Dendritic cell treated with granulocyte-macrophage colony-stimulating factor and Interleukin-4, amounts not matched to agents 40 ng/mL and 50 ng/mL, for 4 days (primary cell): ENCODE measurements at regions of chr2 and their contacts with region 1.

Region 1: DNA sequence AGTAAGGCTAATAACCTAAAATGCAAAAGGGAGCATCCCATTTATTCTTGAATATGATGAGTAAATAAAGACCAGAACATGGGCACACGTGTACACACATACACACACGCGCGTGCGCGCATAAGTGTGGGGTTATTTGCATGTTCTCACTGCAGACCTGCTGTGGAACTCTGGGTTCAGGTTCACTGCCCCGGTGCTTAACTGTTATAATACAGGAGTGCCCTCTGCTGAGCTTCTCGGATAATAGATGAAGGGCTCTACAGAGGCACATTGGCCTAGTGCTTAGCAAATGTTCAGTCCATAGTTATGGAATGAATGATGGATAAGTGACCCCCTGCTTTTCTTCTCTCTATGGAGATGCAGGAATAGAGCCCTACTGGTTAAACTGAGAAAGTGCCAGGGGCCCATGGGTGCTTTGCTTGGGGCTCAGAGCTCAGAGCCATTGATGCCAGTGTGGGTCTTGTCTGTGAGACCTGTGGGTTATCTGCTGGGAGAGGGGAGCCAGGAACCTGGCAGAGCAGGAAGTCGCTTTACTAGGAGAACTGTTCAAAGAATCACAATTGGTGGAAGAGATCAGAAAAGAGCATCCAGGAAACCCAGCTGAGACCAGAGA is 3.6 kb upstream of the ARL4C start:
- H3K4me3 Mint-ChIP-seq: no peak overlapping the region
- H3K27ac Mint-ChIP-seq: no peak overlapping the region
- H3K4me1 Mint-ChIP-seq: peaks cover 12% of the 10 kb centered on the region
- H3K27me3 Mint-ChIP-seq: peaks cover 25% of the 10 kb centered on the region

Region 2: DNA sequence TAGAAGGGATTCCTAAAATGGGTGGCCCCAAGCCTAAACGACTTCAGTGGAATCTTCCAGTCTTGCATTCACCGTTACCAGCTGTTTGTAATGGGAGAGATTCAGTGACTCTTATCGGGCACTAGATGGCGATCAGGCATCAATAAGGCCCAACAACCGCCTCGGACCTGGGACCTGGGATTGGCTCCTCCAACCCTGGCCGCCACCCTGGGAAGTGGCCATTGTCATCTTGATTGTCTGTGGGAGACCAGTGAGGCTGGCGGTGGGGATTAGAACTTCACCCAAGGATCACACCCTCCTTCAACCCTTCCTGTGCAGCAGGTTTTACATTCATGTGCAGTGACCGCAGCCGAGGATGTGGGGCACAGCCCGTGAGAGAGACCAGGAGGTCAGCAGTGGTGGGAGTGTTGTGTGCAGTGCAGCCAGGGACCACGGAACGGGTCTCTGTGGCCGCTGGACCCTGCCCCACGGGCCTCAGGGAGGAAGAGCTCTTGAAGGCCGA is 364.7 kb before region 1 on chr2:
- intact Hi-C with region 1: loop called (anchors 1 kb)
- H3K4me3 Mint-ChIP-seq: no peak overlapping the region
- H3K27ac Mint-ChIP-seq: no peak overlapping the region
- H3K4me1 Mint-ChIP-seq: no peaks in the 10 kb centered on the region
- H3K27me3 Mint-ChIP-seq: peaks cover 1% of the 10 kb centered on the region

Region 3: DNA sequence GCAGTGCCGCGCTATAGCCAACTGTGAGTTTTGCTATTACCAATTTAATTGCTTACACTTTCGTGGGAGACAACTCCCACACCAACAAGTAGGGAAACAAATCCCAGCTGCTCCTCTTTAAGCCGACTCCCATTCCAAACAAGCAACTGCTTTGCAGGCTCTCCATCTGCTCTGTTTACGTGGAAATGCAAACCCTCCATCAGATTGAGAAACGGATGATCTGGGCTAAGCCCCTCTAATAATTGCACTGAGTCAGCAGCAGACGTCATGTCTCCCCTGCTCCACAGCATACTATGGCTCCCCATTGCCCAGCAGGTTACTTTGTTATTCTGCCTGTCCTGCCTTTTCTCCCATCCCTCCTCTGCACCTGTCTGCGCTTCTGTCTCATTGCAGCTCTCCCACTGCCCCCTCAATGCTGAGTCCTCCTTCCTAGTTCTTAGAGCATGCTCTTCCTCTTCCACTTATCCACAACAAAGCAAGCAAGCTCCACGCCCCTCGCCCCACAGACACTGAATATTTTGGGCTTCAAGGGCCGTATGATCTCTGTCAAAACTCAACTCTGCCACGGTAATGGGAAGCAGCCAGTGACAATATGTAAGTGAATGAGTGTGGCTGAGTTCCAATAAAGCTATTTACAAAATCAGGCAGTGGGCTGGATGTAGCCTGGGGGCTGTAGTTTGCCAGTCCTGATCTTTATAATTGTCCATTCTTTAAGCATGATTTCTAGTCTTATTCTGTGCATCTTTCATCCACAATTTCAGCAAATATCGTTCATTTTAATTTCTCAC is 35.9 kb after region 1 on chr2:
- intact Hi-C with region 1: no loop called
- H3K4me3 Mint-ChIP-seq: no peak overlapping the region
- H3K27ac Mint-ChIP-seq: no peak overlapping the region
- H3K4me1 Mint-ChIP-seq: no peaks in the 10 kb centered on the region
- H3K27me3 Mint-ChIP-seq: peaks cover 1% of the 10 kb centered on the region